GM12878 (cell line): ENCODE measurements at regions of chr1 and their contacts with region 1.

Region 1: DNA sequence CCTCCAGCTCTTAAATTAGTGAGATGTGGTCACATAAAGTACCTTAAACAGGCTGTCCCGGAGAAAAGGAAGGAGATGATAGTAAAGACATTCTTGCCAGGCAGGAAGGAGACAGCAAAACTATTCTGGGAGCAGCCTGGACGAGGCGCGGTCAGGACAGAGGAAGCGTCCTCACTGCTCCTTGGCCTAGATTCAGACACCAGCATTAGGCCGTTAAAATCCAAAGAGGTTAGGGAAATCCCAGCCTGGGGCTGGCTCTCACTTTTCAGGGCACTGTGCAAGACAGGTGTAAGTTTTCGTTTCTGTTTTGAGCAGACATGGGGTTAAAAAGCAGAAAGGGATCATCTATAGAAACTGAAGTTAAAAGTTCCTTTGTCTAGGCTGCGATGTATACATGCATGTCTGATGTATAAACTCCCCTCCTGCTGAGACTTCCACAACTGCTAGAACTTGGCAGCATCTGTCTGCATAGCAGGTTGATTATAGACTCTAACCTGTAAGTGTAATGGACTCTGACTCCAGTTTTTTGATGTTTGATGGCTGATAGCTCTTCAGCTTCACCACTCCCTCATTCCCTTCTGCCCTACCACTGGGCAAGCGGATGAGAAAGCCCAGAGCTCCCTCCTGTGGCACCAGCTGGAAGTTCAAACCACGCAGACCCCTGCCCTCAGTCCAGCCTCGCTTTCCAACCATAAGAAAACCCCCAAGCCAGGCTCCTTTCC is 21.5 kb downstream of the STPG1 start:
- DNase-seq: peak; percentile 84
- ATAC-seq: peak; percentile 89
- H3K4me3 ChIP-seq: peak overlapping the region; percentile 58; the same call in 1 of the 2 replicates
- H3K27ac ChIP-seq: peak overlapping the region; percentile 85
- H3K4me1 ChIP-seq: peaks cover 18% of the 10 kb centered on the region
- H3K27me3 ChIP-seq: no peaks in the 10 kb centered on the region; a peak in 1 of 4 replicates
- CTCF ChIP-seq: peak; percentile 78 to 82 (median 78)
- EP300 ChIP-seq: no peak
- POLR2A ChIP-seq: no peak; the same call in none of the 2 replicates
- RAD21 ChIP-seq: peak; percentile 85

Region 2: DNA sequence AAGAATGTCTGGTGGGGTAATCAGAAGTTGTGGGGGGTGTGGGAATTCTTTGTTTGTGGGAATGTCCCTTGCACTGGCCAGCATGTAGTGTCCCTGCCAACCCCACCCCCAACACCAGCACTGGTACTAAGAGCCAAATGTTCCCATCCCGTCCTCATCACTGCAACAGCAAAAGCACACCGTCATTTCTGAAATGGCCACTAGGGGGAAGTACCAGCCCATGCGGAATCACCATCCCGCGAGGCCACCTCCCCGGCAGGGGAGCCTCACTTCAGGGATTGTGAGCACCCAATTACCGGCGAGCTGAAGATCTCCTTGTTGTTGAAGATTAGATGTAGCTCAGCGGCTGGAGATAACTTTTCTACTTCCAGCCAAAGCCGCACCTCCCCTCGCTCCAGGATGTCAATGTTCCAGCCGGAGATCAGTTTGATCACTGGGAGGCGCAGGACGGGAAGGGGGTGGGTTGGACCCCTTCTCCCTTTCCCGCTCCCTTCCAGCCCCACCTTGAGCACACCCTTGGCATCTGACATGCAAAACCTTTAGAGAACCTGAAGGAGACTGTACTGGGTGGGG is 321.1 kb before region 1 on chr1:
- CTCF ChIA-PET with region 1: interaction called, 15 read pairs
- POLR2A ChIA-PET with region 1: no interaction called
- RAD21 ChIA-PET with region 1: interaction called, 5 read pairs
- SMC1A ChIA-PET with region 1: interaction called, 5 read pairs
- in situ Hi-C with region 1: no loop called
- intact Hi-C with region 1: loop called (anchors 5 kb)
- DNase-seq: peak; percentile 12
- ATAC-seq: peak; percentile 98
- H3K4me3 ChIP-seq: no peak overlapping the region
- H3K27ac ChIP-seq: no peak overlapping the region
- H3K4me1 ChIP-seq: no peaks in the 10 kb centered on the region
- H3K27me3 ChIP-seq: peaks cover 0 to 6% of the 10 kb centered on the region in 2 experiments; a peak in 2 of 4 replicates
- CTCF ChIP-seq: peak; percentile 84 to 92 (median 91)
- EP300 ChIP-seq: no peak
- POLR2A ChIP-seq: no peak
- RAD21 ChIP-seq: peak; percentile 82

Region 3: GRCh38 chr1:24201941-24202440 is 190.1 kb before region 1 on chr1:
- CTCF ChIA-PET with region 1: interaction called, 451 read pairs
- POLR2A ChIA-PET with region 1: interaction called, 6 read pairs
- RAD21 ChIA-PET with region 1: interaction called, 225 read pairs
- SMC1A ChIA-PET with region 1: interaction called, 297 read pairs
- in situ Hi-C with region 1: loop called (anchors 5 kb)
- intact Hi-C with region 1: loop called (anchors 1 kb)
- DNase-seq: no peak
- ATAC-seq: peak; percentile 41
- H3K4me3 ChIP-seq: no peak overlapping the region
- H3K27ac ChIP-seq: no peak overlapping the region
- H3K4me1 ChIP-seq: peaks cover 28% of the 10 kb centered on the region
- H3K27me3 ChIP-seq: no peaks in the 10 kb centered on the region; a peak in 1 of 4 replicates
- CTCF ChIP-seq: peak; percentile 78 to 85 (median 82); a peak in 5 of 6 replicates
- EP300 ChIP-seq: no peak
- POLR2A ChIP-seq: no peak
- RAD21 ChIP-seq: peak; percentile 94

Region 4: GRCh38 chr1:24403806-24404205 is 11.8 kb after region 1 on chr1:
- CTCF ChIA-PET with region 1: interaction called, 10 read pairs
- POLR2A ChIA-PET with region 1: interaction called, 3 read pairs
- RAD21 ChIA-PET with region 1: interaction called, 9 read pairs
- SMC1A ChIA-PET with region 1: interaction called, 63 read pairs
- in situ Hi-C with region 1: no loop called
- intact Hi-C with region 1: no loop called
- DNase-seq: no peak
- ATAC-seq: no peak
- H3K4me3 ChIP-seq: no peak overlapping the region
- H3K27ac ChIP-seq: no peak overlapping the region
- H3K4me1 ChIP-seq: no peaks in the 10 kb centered on the region
- H3K27me3 ChIP-seq: no peaks in the 10 kb centered on the region
- CTCF ChIP-seq: no peak
- EP300 ChIP-seq: no peak
- POLR2A ChIP-seq: no peak
- RAD21 ChIP-seq: no peak

Region 5: DNA sequence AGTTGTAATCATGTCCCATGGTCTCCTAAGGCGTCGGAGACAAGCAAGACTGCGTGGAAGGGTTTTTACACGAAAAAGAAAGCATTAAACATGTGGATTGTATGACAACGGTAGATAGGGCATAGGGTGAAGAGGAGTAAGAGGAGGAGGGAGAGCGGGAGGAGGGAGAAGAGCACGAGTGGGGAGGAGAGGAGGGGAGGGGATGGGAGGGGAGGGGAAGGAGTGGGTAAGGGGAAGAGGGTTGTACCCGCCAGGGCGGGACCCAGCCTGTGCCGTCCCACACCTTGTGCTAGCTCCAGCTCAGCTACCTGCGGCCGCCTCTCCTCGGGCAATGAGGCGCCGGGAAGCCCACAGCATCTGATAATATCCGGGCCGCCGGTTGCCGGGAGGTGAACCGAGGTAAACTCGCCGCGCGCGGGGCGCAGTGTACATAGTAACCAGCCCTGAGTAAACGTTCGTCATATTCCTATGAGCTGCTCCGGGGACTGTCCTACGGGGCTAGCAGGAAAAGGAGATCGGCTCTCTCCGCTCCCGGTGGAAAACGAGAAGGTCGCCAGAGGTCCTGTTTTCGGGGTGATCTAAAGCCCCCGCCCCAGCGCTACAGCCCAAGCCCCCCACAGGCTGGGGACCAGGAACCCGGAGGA is 110.1 kb after region 1 on chr1:
- CTCF ChIA-PET with region 1: no interaction called
- POLR2A ChIA-PET with region 1: no interaction called
- RAD21 ChIA-PET with region 1: no interaction called
- SMC1A ChIA-PET with region 1: no interaction called
- in situ Hi-C with region 1: no loop called
- intact Hi-C with region 1: no loop called
- DNase-seq: no peak
- ATAC-seq: peak; percentile 38
- H3K4me3 ChIP-seq: peak overlapping the region; percentile 80; the same call in 1 of the 2 replicates
- H3K27ac ChIP-seq: no peak overlapping the region
- H3K4me1 ChIP-seq: peaks cover 8% of the 10 kb centered on the region
- H3K27me3 ChIP-seq: peaks cover 12 to 20% of the 10 kb centered on the region in 2 experiments
- CTCF ChIP-seq: no peak
- EP300 ChIP-seq: no peak
- POLR2A ChIP-seq: no peak
- RAD21 ChIP-seq: no peak

Region 6: GRCh38 chr1:24526940-24527542 is 135.0 kb after region 1 on chr1:
- CTCF ChIA-PET with region 1: interaction called, 20 read pairs
- POLR2A ChIA-PET with region 1: no interaction called
- RAD21 ChIA-PET with region 1: interaction called, 4 read pairs
- SMC1A ChIA-PET with region 1: interaction called, 11 read pairs
- in situ Hi-C with region 1: no loop called
- intact Hi-C with region 1: no loop called
- DNase-seq: no peak
- ATAC-seq: 0 out of 3 replicates have a peak, but pooled peaks have one; percentile 29
- H3K4me3 ChIP-seq: no peak overlapping the region
- H3K27ac ChIP-seq: no peak overlapping the region
- H3K4me1 ChIP-seq: no peaks in the 10 kb centered on the region
- H3K27me3 ChIP-seq: no peaks in the 10 kb centered on the region; a peak in 2 of 4 replicates
- CTCF ChIP-seq: peak; percentile 30 to 52 (median 47); a peak in 4 of 6 replicates
- EP300 ChIP-seq: no peak
- POLR2A ChIP-seq: no peak
- RAD21 ChIP-seq: peak; percentile 33; the same call in 1 of the 2 replicates